ENCODE measurements at regions of chr5 and their contacts with region 1.

Region 1: GRCh38 chr5:163564321-163564938 is 59.0 kb downstream of the MAT2B start:
- DNase-seq: peak; percentile 52
- H3K4me3 ChIP-seq: no peak overlapping the region
- H3K27ac ChIP-seq: no peak overlapping the region
- H3K4me1 ChIP-seq: no peaks in the 10 kb centered on the region
- H3K27me3 ChIP-seq: no peaks in the 10 kb centered on the region
- CTCF ChIP-seq: peak; percentile 79 to 87 (median 82)
- POLR2A ChIP-seq: no peak

Region 2: GRCh38 chr5:164002628-164003027 is 438.2 kb after region 1 on chr5:
- intact Hi-C with region 1: loop called (anchors 10 kb)
- DNase-seq: no peak
- H3K4me3 ChIP-seq: no peak overlapping the region
- H3K27ac ChIP-seq: no peak overlapping the region
- H3K4me1 ChIP-seq: no peaks in the 10 kb centered on the region
- H3K27me3 ChIP-seq: no peaks in the 10 kb centered on the region
- CTCF ChIP-seq: no peak
- POLR2A ChIP-seq: no peak

Region 3: DNA sequence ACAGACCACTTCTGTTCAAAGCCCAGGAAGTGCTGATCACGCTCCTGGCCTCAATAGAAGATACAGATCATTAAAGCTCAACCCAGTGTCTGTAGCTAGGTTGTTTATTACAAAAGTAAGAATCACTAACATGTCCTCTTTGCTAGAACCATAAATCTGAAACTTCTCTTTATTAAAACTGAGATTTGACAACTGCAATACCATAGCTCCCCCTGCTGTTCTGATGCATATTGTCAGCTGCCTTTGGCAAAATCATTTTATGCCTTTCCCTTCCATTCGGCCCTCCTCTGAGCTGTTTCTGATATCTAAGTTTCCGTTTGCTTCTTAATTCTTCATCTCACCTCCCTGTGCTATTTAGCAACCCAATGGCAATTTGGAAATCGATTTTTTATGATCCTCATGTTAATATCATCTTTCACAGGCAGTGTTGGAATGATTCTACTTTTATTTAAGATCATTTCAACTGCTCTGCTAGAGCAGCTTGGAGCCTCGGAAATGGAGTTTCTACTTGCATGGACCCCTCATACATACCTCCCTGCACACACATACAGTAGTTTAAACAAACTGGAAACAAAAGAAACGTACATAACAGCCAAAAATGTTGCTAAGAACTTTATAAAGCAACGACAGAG is 939.8 kb after region 1 on chr5:
- intact Hi-C with region 1: loop called (anchors 5 kb)
- DNase-seq: peak; percentile 46
- H3K4me3 ChIP-seq: no peak overlapping the region
- H3K27ac ChIP-seq: no peak overlapping the region
- H3K4me1 ChIP-seq: no peaks in the 10 kb centered on the region
- H3K27me3 ChIP-seq: no peaks in the 10 kb centered on the region
- CTCF ChIP-seq: peak; percentile 51 to 82 (median 73)
- POLR2A ChIP-seq: no peak

Region 4: GRCh38 chr5:164772122-164772521 is 1207.7 kb after region 1 on chr5:
- intact Hi-C with region 1: no loop called
- DNase-seq: no peak
- H3K4me3 ChIP-seq: no peak overlapping the region
- H3K27ac ChIP-seq: no peak overlapping the region
- H3K4me1 ChIP-seq: no peaks in the 10 kb centered on the region
- H3K27me3 ChIP-seq: no peaks in the 10 kb centered on the region
- CTCF ChIP-seq: no peak
- POLR2A ChIP-seq: no peak

Region 5: GRCh38 chr5:165209086-165209727 is 1644.8 kb after region 1 on chr5:
- intact Hi-C with region 1: loop called (anchors 10 kb)
- DNase-seq: no peak
- H3K4me3 ChIP-seq: no peak overlapping the region
- H3K27ac ChIP-seq: no peak overlapping the region
- H3K4me1 ChIP-seq: peaks cover 5% of the 10 kb centered on the region
- H3K27me3 ChIP-seq: no peaks in the 10 kb centered on the region
- CTCF ChIP-seq: peak; percentile 44 to 77 (median 72)
- POLR2A ChIP-seq: no peak